ENCODE measurements at regions of chr11 and their contacts with region 1.

Region 1: GRCh38 chr11:61792310-61793085 is at the starts of genes FEN1 and TMEM258:
- DNase-seq: peak; percentile 92
- ATAC-seq: peak; percentile 93
- H3K4me3 Mint-ChIP-seq: peak within 1 kb of the TSS; percentile 86
- H3K27ac Mint-ChIP-seq: peak within 1 kb of the TSS; percentile 100
- H3K4me1 Mint-ChIP-seq: peaks cover 54% of the 10 kb centered on the region
- H3K27me3 Mint-ChIP-seq: no peaks in the 10 kb centered on the region
- total RNA-seq, gene FEN1: 146 TPM
- total RNA-seq, gene TMEM258: 154 to 163 TPM

Region 2: DNA sequence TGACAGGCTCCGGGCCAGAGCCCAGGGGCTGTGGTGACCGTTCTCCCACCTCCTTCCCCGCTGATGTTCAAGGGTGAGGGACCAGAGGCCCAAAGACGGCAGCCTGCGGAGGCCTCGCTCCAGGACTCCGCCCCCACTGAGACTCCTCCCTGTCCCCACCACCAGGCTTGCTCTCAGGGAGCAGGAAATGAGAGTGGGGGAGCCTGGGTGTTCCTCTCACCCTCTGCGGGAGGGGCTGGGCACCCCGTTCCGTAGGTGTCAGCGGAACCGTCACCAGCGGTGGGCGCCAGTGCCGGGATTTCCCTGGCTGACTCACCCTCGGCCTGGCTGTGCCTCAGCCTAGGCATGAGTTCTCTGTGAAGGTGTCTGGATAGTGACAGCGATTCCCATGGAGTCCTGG is 96.6 kb before region 1 on chr11:
- CTCF ChIA-PET with region 1: no interaction called
- POLR2A ChIA-PET with region 1: no interaction called
- DNase-seq: peak; percentile 90
- ATAC-seq: peak; percentile 97
- H3K4me3 Mint-ChIP-seq: peak overlapping the region; percentile 30
- H3K27ac Mint-ChIP-seq: peak overlapping the region; percentile 59
- H3K4me1 Mint-ChIP-seq: peaks cover 29% of the 10 kb centered on the region
- H3K27me3 Mint-ChIP-seq: peaks cover 1% of the 10 kb centered on the region

Region 3: GRCh38 chr11:61711498-61711897 is 81.0 kb before region 1 on chr11:
- CTCF ChIA-PET with region 1: no interaction called
- POLR2A ChIA-PET with region 1: no interaction called
- DNase-seq: no peak
- ATAC-seq: no peak
- H3K4me3 Mint-ChIP-seq: no peak overlapping the region
- H3K27ac Mint-ChIP-seq: no peak overlapping the region
- H3K4me1 Mint-ChIP-seq: no peaks in the 10 kb centered on the region
- H3K27me3 Mint-ChIP-seq: peaks cover 5% of the 10 kb centered on the region

Region 4: GRCh38 chr11:61747192-61747966 is 45.1 kb before region 1 on chr11:
- CTCF ChIA-PET with region 1: interaction called, 16 read pairs
- POLR2A ChIA-PET with region 1: interaction called, 3 read pairs
- DNase-seq: peak; percentile 62
- ATAC-seq: peak; percentile 54
- H3K4me3 Mint-ChIP-seq: no peak overlapping the region
- H3K27ac Mint-ChIP-seq: no peak overlapping the region
- H3K4me1 Mint-ChIP-seq: no peaks in the 10 kb centered on the region
- H3K27me3 Mint-ChIP-seq: peaks cover 13% of the 10 kb centered on the region

Region 5: GRCh38 chr11:61803889-61804647 is 11.6 kb after region 1 on chr11:
- CTCF ChIA-PET with region 1: interaction called, 43 read pairs
- POLR2A ChIA-PET with region 1: interaction called, 15 read pairs
- DNase-seq: no peak
- ATAC-seq: no peak
- H3K4me3 Mint-ChIP-seq: no peak overlapping the region
- H3K27ac Mint-ChIP-seq: peak overlapping the region; percentile 43
- H3K4me1 Mint-ChIP-seq: peaks cover 11% of the 10 kb centered on the region
- H3K27me3 Mint-ChIP-seq: no peaks in the 10 kb centered on the region

Region 6: DNA sequence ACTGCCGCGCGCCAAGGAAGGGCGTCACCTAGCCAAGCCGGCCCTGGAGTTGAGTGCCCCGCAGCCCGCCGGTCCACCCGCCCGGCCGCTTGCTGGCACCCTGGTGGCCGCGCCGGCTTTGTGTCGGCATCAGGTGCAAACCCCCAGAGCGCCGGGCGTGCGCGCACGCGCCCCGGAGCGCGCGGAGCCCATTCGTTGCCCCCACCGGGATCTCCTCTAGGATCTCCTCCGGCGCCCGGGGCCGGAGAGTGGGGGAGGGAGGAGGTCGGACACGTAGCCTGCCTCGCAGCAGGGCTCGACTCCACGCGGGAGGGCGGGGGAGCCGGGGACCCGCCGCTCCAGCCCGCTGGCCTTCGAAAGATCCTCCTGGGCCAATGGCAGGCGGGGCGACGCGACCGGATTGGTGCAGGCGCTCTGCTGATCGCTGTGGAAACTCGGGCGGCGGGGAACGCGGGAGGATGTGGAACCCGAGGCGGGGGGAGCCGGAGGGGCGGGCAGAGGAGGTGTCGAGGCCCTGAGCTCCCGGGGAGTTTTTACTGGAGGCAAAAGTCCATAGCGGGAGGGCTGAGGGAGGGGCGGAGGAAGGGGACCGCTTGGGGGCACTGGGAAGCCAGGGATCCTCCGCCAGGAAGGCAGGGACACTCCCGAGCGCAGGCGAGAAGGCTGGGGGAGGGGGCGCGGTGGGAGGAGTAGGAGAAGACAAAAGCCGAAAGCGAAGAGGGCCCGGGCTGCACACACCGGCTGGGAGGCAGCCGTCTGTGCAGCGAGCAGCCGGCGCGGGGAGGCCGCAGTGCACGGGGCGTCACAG is 35.3 kb after region 1 on chr11 and contains the start of gene FADS2:
- CTCF ChIA-PET with region 1: interaction called, 45 read pairs
- POLR2A ChIA-PET with region 1: interaction called, 39 read pairs
- DNase-seq: peak; percentile 96
- ATAC-seq: peak; percentile 86
- H3K4me3 Mint-ChIP-seq: peak within 1 kb of the TSS; percentile 89
- H3K27ac Mint-ChIP-seq: peak within 1 kb of the TSS; percentile 93
- H3K4me1 Mint-ChIP-seq: peaks cover 46% of the 10 kb centered on the region
- H3K27me3 Mint-ChIP-seq: peaks cover 2% of the 10 kb centered on the region
- total RNA-seq, gene FADS2: 395 to 416 TPM

Region 7: GRCh38 chr11:61871158-61871597 is 78.7 kb after region 1 on chr11:
- CTCF ChIA-PET with region 1: interaction called, 32 read pairs
- POLR2A ChIA-PET with region 1: interaction called, 3 read pairs
- DNase-seq: peak; percentile 77
- ATAC-seq: peak; percentile 94
- H3K4me3 Mint-ChIP-seq: peak overlapping the region; percentile 54
- H3K27ac Mint-ChIP-seq: peak overlapping the region; percentile 61
- H3K4me1 Mint-ChIP-seq: peaks cover 8% of the 10 kb centered on the region
- H3K27me3 Mint-ChIP-seq: no peaks in the 10 kb centered on the region

Region 8: GRCh38 chr11:61899146-61899841 is 106.8 kb after region 1 on chr11:
- CTCF ChIA-PET with region 1: interaction called, 50 read pairs
- POLR2A ChIA-PET with region 1: no interaction called
- DNase-seq: peak; percentile 94
- ATAC-seq: peak; percentile 92
- H3K4me3 Mint-ChIP-seq: no peak overlapping the region
- H3K27ac Mint-ChIP-seq: peak overlapping the region; percentile 45
- H3K4me1 Mint-ChIP-seq: peaks cover 7% of the 10 kb centered on the region
- H3K27me3 Mint-ChIP-seq: peaks cover 4% of the 10 kb centered on the region

Region 9: GRCh38 chr11:62004473-62004872 is 212.0 kb after region 1 on chr11:
- CTCF ChIA-PET with region 1: no interaction called
- POLR2A ChIA-PET with region 1: no interaction called
- DNase-seq: no peak
- ATAC-seq: no peak
- H3K4me3 Mint-ChIP-seq: no peak overlapping the region
- H3K27ac Mint-ChIP-seq: no peak overlapping the region
- H3K4me1 Mint-ChIP-seq: no peaks in the 10 kb centered on the region
- H3K27me3 Mint-ChIP-seq: no peaks in the 10 kb centered on the region

Region 10: DNA sequence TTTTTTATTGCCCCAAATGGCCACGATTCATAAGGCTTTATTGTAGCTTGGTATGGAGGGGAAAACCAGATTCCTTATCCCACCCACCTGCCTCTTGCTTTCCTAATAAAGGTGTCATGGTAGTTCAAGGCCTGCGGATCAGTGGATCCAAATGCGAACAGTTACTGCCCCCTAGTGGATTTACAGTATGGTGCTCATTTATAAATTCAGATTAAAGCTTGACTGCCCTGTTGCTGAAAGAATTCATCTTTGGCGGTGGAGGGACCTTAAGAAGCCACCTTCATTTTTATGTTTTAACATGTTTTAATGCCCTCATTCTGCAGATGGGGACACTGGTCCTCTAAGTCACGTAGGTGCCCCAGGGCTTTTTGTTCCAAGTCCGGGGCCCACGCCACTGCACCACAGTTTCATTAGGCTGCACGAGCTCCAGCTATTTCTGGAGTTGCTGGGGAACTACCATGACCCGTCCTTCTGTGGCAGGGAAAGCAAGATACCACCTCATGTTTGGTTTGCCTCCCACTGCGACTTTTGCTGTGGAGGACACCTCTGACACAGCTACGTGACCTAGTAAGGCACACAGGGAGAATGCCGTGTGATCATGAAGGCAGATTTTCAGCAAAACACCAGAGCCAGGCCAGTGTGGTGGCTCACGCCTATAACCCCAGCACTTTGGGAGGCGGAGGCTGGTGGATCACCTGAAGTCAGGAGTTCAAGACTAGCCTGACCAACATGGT is 315.7 kb after region 1 on chr11:
- CTCF ChIA-PET with region 1: interaction called, 62 read pairs
- POLR2A ChIA-PET with region 1: no interaction called
- DNase-seq: peak; percentile 63
- ATAC-seq: peak; percentile 21
- H3K4me3 Mint-ChIP-seq: no peak overlapping the region
- H3K27ac Mint-ChIP-seq: no peak overlapping the region
- H3K4me1 Mint-ChIP-seq: peaks cover 22% of the 10 kb centered on the region
- H3K27me3 Mint-ChIP-seq: peaks cover 12% of the 10 kb centered on the region

Measured in activated CD8-positive, alpha-beta T cell treated with anti-CD3 and anti-CD28 coated beads, Interleukin-2, amount 10 ng/mL, durations not matched to agents 7 days and 5 days (primary cell).